SK-N-SH (cell line): ENCODE measurements at regions of chr7 and their contacts with region 1.

Region 1: GRCh38 chr7:104848138-104848990 is 165.6 kb upstream of the KMT2E start:
- DNase-seq: peak; percentile 73
- H3K4me3 ChIP-seq: no peak overlapping the region; a peak in 1 of 4 replicates
- H3K27ac ChIP-seq: no peak overlapping the region
- H3K4me1 ChIP-seq: peaks cover 0 to 4% of the 10 kb centered on the region in 2 experiments; a peak in 1 of 4 replicates
- H3K27me3 ChIP-seq: peaks cover 63% of the 10 kb centered on the region
- CTCF ChIP-seq: peak; percentile 99
- EP300 ChIP-seq: no peak
- RAD21 ChIP-seq: peak; percentile 89

Region 2: DNA sequence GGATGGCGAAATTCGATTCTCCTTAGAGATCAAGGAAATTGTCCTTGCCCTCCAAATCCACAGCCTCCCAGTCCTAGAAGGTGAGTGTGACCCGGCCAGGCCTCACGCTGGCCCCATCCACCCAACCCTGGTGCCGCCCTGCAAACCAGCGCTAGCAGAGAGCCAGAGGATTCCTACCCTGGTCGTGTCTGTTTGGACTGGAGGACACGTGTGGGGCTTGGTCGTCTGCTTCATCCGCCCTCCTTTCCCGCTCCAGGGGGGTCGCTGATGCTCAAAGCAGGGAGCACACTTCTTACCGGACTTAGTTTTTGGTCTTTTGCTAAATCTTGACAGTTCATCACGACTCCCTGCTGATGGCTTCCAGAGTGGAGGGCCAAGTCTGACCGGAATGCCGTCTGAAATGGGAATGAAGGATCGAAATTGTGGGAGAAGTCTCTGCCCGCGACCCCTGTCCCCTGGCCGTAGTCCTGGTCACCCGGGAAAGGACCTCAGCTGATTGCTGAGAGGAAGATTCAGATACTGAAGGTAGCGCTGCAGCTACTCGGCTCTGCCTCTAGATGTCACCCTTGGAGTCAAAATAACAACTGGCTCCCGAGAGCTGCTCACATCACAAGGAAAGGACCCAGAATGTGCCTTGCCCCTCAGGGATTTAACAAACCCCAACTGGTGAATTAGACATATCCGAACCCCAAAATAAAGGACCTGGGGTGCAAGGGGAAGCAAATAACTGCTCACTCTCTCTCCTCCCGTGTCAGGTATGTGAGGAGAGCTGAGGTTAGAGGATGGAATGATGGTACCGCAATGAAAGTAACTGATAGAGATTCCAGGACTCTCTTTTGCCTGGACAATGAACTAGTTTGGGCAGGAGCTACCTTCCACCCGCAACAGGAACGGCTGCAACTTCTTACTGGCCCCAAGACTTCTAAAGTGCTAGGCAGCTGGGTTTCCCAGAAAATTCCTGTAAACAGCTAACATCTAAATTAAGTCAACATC is 617.0 kb before region 1 on chr7:
- CTCF ChIA-PET with region 1: interaction called, 73 read pairs
- POLR2A ChIA-PET with region 1: no interaction called
- DNase-seq: peak; percentile 79
- H3K4me3 ChIP-seq: no peak overlapping the region; a peak in 2 of 4 replicates
- H3K27ac ChIP-seq: no peak overlapping the region
- H3K4me1 ChIP-seq: peaks cover 0 to 13% of the 10 kb centered on the region in 2 experiments; a peak in 1 of 4 replicates
- H3K27me3 ChIP-seq: peaks cover 13% of the 10 kb centered on the region; the same call in 1 of the 2 replicates
- CTCF ChIP-seq: peak; percentile 94
- EP300 ChIP-seq: no peak
- RAD21 ChIP-seq: peak; percentile 91

Region 3: GRCh38 chr7:104267701-104268368 is 580.5 kb before region 1 on chr7:
- CTCF ChIA-PET with region 1: interaction called, 47 read pairs
- POLR2A ChIA-PET with region 1: no interaction called
- DNase-seq: peak; percentile 36
- H3K4me3 ChIP-seq: no peak overlapping the region
- H3K27ac ChIP-seq: no peak overlapping the region
- H3K4me1 ChIP-seq: no peaks in the 10 kb centered on the region
- H3K27me3 ChIP-seq: 0 out of 2 replicates have a peak, but pooled peaks cover 5% of the 10 kb centered on the region
- CTCF ChIP-seq: peak; percentile 79
- EP300 ChIP-seq: no peak
- RAD21 ChIP-seq: peak; percentile 59

Region 4: DNA sequence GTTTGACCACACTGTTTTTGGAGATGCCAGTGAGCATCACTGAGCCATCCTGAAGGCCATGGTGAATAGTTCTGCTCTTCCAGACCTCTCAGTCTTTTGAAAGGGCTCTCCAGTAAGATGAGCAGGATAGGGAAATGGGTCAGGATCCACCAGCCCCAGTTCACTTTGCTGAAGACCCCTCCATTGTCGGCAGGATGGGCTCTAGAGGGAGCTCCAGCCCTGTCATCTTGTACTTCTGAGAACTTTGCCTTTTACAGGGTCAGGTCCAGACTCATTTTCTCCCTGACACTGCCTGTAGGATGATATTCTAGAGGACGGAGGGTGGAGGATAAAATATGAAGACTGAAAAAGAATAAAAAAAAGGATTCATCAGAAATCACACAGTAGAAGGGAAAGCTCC is 506.8 kb before region 1 on chr7:
- CTCF ChIA-PET with region 1: interaction called, 156 read pairs
- POLR2A ChIA-PET with region 1: no interaction called
- DNase-seq: peak; percentile 69
- H3K4me3 ChIP-seq: no peak overlapping the region; a peak in 1 of 4 replicates
- H3K27ac ChIP-seq: no peak overlapping the region
- H3K4me1 ChIP-seq: no peaks in the 10 kb centered on the region
- H3K27me3 ChIP-seq: no peaks in the 10 kb centered on the region
- CTCF ChIP-seq: peak; percentile 36
- EP300 ChIP-seq: no peak
- RAD21 ChIP-seq: peak; percentile 83

Region 5: GRCh38 chr7:104627516-104627915 is 220.8 kb before region 1 on chr7:
- CTCF ChIA-PET with region 1: interaction called, 21 read pairs
- POLR2A ChIA-PET with region 1: no interaction called
- DNase-seq: no peak
- H3K4me3 ChIP-seq: no peak overlapping the region
- H3K27ac ChIP-seq: peak overlapping the region in 1 of 2 experiments; percentile 86; a peak in 2 of 4 replicates
- H3K4me1 ChIP-seq: peaks cover 0 to 42% of the 10 kb centered on the region in 2 experiments; a peak in 2 of 4 replicates
- H3K27me3 ChIP-seq: no peaks in the 10 kb centered on the region
- CTCF ChIP-seq: no peak
- EP300 ChIP-seq: no peak
- RAD21 ChIP-seq: no peak

Region 6: GRCh38 chr7:104862719-104863118 is 14.4 kb after region 1 on chr7:
- CTCF ChIA-PET with region 1: interaction called, 51 read pairs
- POLR2A ChIA-PET with region 1: no interaction called
- DNase-seq: peak; percentile 63
- H3K4me3 ChIP-seq: no peak overlapping the region
- H3K27ac ChIP-seq: no peak overlapping the region
- H3K4me1 ChIP-seq: peaks cover 0 to 4% of the 10 kb centered on the region in 2 experiments; a peak in 1 of 4 replicates
- H3K27me3 ChIP-seq: peaks cover 54% of the 10 kb centered on the region
- CTCF ChIP-seq: peak; percentile 58
- EP300 ChIP-seq: no peak
- RAD21 ChIP-seq: peak; percentile 66